ENCODE measurements at regions of chr18 and their contacts with region 1.

Region 1: GRCh38 chr18:48007955-48008701 is 77.7 kb upstream of the SMAD2 start:
- DNase-seq: peak; percentile 85

Region 2: GRCh38 chr18:47970664-47971531 is 37.2 kb before region 1 on chr18:
- intact Hi-C with region 1: no loop called
- DNase-seq: no peak

Region 3: DNA sequence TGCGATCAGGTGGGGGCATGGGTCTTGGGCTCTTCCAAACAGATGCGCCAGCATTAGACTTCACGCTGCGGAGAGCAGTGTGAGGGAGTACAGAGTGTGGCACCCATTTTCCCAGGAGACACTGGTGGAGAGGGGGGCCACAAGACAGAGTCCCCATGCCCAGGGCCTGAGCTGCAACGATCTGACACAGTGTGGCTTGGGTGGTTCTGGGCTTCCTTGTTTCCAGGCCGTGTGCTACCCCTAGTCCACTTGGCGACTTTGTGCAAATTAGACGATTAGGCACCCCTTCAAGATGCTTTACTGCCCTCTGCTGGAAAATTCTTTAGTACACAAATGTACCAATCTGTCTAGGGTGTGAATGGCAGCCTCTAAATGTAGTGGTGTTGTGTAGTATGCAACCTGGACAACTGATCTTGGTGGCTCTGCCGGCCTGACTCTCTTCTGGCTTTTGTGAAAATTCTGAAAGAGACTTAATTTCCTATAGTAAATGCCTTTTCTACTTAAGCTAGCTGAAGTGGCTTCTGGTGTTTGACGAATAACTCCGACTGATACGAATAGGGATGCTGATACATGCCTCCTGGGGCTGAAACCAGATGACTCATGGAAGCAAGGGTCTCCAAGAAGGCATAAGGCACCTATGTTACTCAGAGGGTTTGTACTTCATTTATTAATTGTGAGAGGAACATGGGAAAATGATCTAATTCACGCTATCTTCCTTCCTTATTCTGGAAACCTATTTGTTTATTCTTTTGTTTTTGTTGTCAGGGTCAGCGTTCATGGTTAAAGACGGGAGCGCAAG is 14.6 kb after region 1 on chr18:
- intact Hi-C with region 1: loop called in 1 of 2 experiments (anchors 1 kb)
- DNase-seq: peak; percentile 68

Measured in posterior vena cava (tissue), 2 donors.